ENCODE measurements at regions of chr4 and their contacts with region 1.

Region 1: GRCh38 chr4:13627606-13628301 is at the start of gene BOD1L1:
- DNase-seq: peak; percentile 46 to 92
- H3K4me3 ChIP-seq: peak within 1 kb of the TSS; percentile 85 to 93
- H3K27ac ChIP-seq: peak within 1 kb of the TSS; percentile 94 to 96
- H3K4me1 ChIP-seq: peaks cover 0 to 18% of the 10 kb centered on the region in 2 donors
- H3K27me3 ChIP-seq: no peaks in the 10 kb centered on the region
- CTCF ChIP-seq: peak; percentile 36 to 45 (median 39)
- total RNA-seq, gene BOD1L1: 8.4 TPM

Region 2: GRCh38 chr4:13654158-13654797 is 26.5 kb after region 1 on chr4:
- intact Hi-C with region 1: loop called (anchors 2 kb)
- DNase-seq: peak in 1 of 2 donors; percentile 89
- H3K4me3 ChIP-seq: peak overlapping the region; percentile 61 to 66
- H3K27ac ChIP-seq: peak overlapping the region in 1 of 2 donors; percentile 22
- H3K4me1 ChIP-seq: peaks cover 0 to 4% of the 10 kb centered on the region in 2 donors
- H3K27me3 ChIP-seq: no peaks in the 10 kb centered on the region
- CTCF ChIP-seq: peak; percentile 58 to 82 (median 74)